CD8-positive, alpha-beta T cell (primary cell): ENCODE measurements at regions of chr2 and their contacts with region 1.

Region 1: GRCh38 chr2:62774555-62775366 is 69.2 kb downstream of the EHBP1 start:
- DNase-seq: peak in 3 of 9 experiments; percentile 7 to 56 (median 48)
- ATAC-seq: no peak
- H3K4me3 ChIP-seq: no peak overlapping the region
- H3K4me3 Mint-ChIP-seq: no peak overlapping the region
- H3K27ac ChIP-seq: no peak overlapping the region
- H3K27ac Mint-ChIP-seq: no peak overlapping the region
- H3K4me1 ChIP-seq: no peaks in the 10 kb centered on the region
- H3K4me1 Mint-ChIP-seq: no peaks in the 10 kb centered on the region
- H3K27me3 ChIP-seq: no peaks in the 10 kb centered on the region
- H3K27me3 Mint-ChIP-seq: no peaks in the 10 kb centered on the region
- CTCF ChIP-seq: peak; percentile 90

Region 2: GRCh38 chr2:61922714-61923113 is 852.0 kb before region 1 on chr2:
- CTCF ChIA-PET with region 1: interaction called, 3 read pairs
- POLR2A ChIA-PET with region 1: no interaction called
- intact Hi-C with region 1: loop called in 1 of 2 experiments (anchors 2 kb)
- DNase-seq: no peak
- ATAC-seq: no peak
- H3K4me3 ChIP-seq: no peak overlapping the region
- H3K4me3 Mint-ChIP-seq: no peak overlapping the region
- H3K27ac ChIP-seq: no peak overlapping the region
- H3K27ac Mint-ChIP-seq: no peak overlapping the region
- H3K4me1 ChIP-seq: no peaks in the 10 kb centered on the region
- H3K4me1 Mint-ChIP-seq: no peaks in the 10 kb centered on the region
- H3K27me3 ChIP-seq: no peaks in the 10 kb centered on the region
- H3K27me3 Mint-ChIP-seq: no peaks in the 10 kb centered on the region
- CTCF ChIP-seq: no peak

Region 3: DNA sequence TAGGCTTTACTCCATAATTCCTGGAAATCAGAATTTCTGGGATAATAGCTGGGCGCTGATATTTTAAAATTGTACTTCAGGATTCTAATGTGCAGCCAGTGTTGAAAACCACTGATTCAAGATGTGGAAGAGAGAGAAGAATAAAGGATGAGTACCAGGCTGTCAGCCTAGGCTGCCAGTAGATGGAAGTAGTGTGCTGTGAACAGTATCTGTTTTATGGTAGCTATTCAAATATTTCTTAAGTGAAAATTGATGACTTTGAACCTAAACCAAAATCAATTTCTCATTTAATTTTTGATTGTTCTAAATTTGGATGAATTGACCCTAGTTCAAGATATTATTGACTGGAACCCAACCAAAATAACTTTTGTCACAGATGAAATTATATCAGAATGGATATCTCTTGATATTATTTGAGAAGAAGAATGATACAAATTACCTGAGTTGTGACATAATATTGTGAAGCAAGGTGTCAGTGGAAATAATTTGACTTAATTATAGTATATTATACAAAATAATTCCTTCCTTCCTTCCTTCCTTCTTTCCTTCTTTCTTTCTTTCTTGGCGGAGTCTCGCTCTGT is 781.2 kb before region 1 on chr2:
- CTCF ChIA-PET with region 1: no interaction called
- POLR2A ChIA-PET with region 1: no interaction called
- intact Hi-C with region 1: loop called in 1 of 2 experiments (anchors 5 kb)
- DNase-seq: peak in 3 of 9 experiments; percentile 13 to 64 (median 48)
- ATAC-seq: no peak
- H3K4me3 ChIP-seq: no peak overlapping the region
- H3K4me3 Mint-ChIP-seq: no peak overlapping the region
- H3K27ac ChIP-seq: no peak overlapping the region
- H3K27ac Mint-ChIP-seq: no peak overlapping the region
- H3K4me1 ChIP-seq: no peaks in the 10 kb centered on the region
- H3K4me1 Mint-ChIP-seq: no peaks in the 10 kb centered on the region
- H3K27me3 ChIP-seq: no peaks in the 10 kb centered on the region
- H3K27me3 Mint-ChIP-seq: no peaks in the 10 kb centered on the region
- CTCF ChIP-seq: peak; percentile 63

Region 4: GRCh38 chr2:62475172-62476011 is 299.4 kb before region 1 on chr2:
- CTCF ChIA-PET with region 1: interaction called, 3 read pairs
- POLR2A ChIA-PET with region 1: no interaction called
- intact Hi-C with region 1: loop called in 1 of 2 experiments (anchors 5 kb)
- DNase-seq: peak in 3 of 9 experiments; percentile 16 to 48 (median 28)
- ATAC-seq: peak; percentile 20
- H3K4me3 ChIP-seq: peak overlapping the region in 1 of 2 experiments; percentile 23
- H3K4me3 Mint-ChIP-seq: peak overlapping the region; percentile 65
- H3K27ac ChIP-seq: peak overlapping the region in 1 of 2 experiments; percentile 26
- H3K27ac Mint-ChIP-seq: no peak overlapping the region
- H3K4me1 ChIP-seq: peaks cover 3% of the 10 kb centered on the region
- H3K4me1 Mint-ChIP-seq: peaks cover 9% of the 10 kb centered on the region
- H3K27me3 ChIP-seq: no peaks in the 10 kb centered on the region
- H3K27me3 Mint-ChIP-seq: peaks cover 1% of the 10 kb centered on the region
- CTCF ChIP-seq: no peak